ENCODE measurements at regions of chr18 and their contacts with region 1.

Region 1: GRCh38 chr18:72544092-72544886 is at the start of gene CBLN2:
- DNase-seq: no peak
- H3K4me3 ChIP-seq: peak within 1 kb of the TSS in 3 of 4 donors; percentile 28 to 42 (median 34)
- H3K27ac ChIP-seq: no peak within 1 kb of the TSS
- H3K4me1 ChIP-seq: peaks cover 0 to 31% (median 26%) of the 10 kb centered on the region in 4 donors
- H3K27me3 ChIP-seq: peaks cover 24 to 67% (median 31%) of the 10 kb centered on the region in 3 donors
- CTCF ChIP-seq: peak in 2 of 4 experiments; percentile 53 to 77
- EP300 ChIP-seq: no peak
- POLR2A ChIP-seq: no peak
- total RNA-seq, gene CBLN2: 0.16 to 6.4 (median 5.2) TPM

Region 2: DNA sequence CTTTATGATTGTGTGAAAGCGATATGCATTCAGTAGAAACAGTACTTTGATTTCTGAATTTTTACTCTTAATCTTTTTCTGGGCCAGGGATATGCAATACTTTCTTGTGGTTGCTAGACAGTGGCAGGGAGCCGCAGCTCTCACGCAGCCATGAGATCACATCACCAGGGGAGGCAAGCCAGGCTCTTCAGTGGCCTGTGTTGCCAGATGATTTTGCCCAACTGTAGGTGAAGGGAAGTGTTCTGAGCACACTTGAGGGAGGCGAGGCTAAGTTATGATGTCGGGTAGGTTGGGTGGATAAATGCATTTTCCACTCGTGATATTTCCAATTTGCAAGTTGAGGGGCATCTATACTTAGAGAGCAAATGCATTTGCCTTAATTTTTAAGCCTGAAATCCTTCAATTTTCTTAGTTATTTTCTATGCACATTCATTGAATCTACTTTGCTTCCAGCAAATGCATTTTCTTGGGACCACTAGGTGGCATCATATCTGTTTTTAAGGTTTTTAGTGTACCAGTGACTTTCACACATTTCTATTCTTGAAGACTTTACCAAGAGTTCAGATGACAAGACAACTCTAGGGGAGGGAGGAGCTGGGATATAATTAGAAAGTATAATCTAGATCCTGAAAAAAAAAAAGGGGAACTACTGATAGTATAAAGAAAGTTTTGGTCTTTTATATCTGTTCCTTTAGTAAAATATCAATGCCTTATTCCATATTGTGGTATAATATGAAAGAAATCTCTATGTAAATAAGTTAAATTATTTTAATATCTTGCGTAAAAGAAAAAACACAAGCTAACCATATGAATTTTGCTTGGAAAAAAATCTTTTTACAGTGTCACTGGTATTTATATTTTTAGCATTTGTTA is 1612.1 kb before region 1 on chr18:
- intact Hi-C with region 1: loop called (anchors 5 kb)
- DNase-seq: no peak
- H3K4me3 ChIP-seq: no peak overlapping the region
- H3K27ac ChIP-seq: no peak overlapping the region
- H3K4me1 ChIP-seq: no peaks in the 10 kb centered on the region
- H3K27me3 ChIP-seq: no peaks in the 10 kb centered on the region
- CTCF ChIP-seq: peak in 1 of 4 experiments; percentile 53
- EP300 ChIP-seq: no peak
- POLR2A ChIP-seq: no peak

Region 3: DNA sequence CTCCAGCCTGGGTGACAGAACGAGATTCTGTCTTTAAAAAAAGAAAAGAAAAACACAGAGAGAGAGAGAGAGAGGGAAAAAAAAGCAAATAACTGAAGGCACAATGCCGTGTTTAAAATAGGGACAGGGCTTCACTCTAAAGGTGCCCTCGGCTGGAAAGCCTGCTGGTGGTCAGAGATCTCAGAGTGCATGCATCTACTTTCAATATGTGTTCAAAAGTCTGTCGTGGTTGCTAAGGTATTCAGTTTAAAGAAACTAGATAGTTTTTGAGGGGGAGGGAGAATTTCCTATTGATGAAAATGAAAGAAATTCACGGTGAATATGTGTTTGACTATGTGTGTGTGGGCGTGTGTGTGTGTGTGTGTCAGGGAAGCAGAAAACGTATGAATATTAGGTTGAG is 10.8 kb after region 1 on chr18:
- intact Hi-C with region 1: no loop called
- DNase-seq: no peak
- H3K4me3 ChIP-seq: no peak overlapping the region
- H3K27ac ChIP-seq: no peak overlapping the region
- H3K4me1 ChIP-seq: no peaks in the 10 kb centered on the region
- H3K27me3 ChIP-seq: no peaks in the 10 kb centered on the region
- CTCF ChIP-seq: no peak
- EP300 ChIP-seq: no peak
- POLR2A ChIP-seq: no peak

Region 4: GRCh38 chr18:72808680-72809079 is 264.4 kb after region 1 on chr18:
- intact Hi-C with region 1: no loop called
- DNase-seq: no peak
- H3K4me3 ChIP-seq: no peak overlapping the region
- H3K27ac ChIP-seq: no peak overlapping the region
- H3K4me1 ChIP-seq: no peaks in the 10 kb centered on the region
- H3K27me3 ChIP-seq: no peaks in the 10 kb centered on the region
- CTCF ChIP-seq: no peak
- EP300 ChIP-seq: no peak
- POLR2A ChIP-seq: no peak

Region 5: DNA sequence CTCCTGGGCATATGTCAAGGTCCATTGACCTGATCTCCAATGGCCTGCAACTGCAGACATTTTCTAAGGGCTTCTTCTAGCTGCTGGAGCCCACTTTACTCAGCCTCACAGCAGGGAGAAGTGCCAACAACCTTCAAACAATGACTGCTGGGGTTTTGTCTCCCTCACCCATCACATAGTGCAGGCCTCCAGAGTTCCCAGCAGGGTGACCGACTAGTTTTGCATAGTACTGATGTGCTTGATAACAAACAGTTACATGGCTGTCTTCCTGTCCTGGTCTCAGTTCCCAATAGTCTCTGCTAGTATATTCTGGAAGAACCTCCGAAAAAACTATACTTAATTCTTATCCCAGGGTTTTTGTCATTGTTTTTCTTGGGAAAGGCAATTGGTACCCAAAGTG is 333.9 kb after region 1 on chr18:
- intact Hi-C with region 1: no loop called
- DNase-seq: no peak
- H3K4me3 ChIP-seq: no peak overlapping the region
- H3K27ac ChIP-seq: no peak overlapping the region
- H3K4me1 ChIP-seq: no peaks in the 10 kb centered on the region
- H3K27me3 ChIP-seq: no peaks in the 10 kb centered on the region
- CTCF ChIP-seq: no peak
- EP300 ChIP-seq: no peak
- POLR2A ChIP-seq: no peak